CD8-positive, alpha-beta T cell (primary cell): ENCODE measurements at regions of chr16 and their contacts with region 1.

Region 1: DNA sequence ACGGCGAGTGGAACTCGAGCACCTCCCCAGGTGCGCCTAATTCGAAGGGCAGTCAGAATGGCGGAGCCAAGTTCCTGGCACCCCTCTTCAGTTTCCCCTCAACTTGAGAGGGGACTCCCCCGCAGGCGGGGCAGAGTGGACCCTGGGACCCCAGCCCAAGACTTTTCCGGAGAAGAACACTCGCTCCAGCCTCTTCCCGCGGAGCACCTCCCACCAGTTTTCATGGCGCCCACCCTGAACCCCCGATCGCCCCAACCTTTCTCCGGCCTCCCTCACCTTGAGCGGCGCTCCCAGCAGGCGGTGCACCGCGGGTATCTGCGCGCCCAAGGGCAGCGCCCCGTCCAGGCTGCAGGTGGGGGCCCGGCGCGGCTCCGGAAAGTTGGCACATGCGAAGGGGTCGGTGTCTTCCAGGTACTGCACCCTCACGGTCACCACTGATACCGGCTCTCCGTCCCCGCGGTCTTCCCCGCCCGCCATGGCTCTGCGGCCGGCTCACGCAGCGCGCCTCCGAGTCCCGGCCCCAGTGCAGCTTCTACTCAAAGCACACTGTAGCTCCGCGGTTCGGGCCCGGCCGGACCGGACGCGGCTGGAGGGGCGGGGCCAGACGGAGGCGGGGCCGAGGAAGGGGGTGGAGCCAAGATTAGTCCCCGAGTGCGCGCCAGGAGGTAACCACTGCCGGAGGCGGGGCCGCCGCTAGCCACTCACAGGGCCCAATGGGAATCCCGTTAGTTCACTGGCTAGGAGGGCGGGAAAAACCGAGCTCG is at the start of gene FHOD1:
- DNase-seq: peak; percentile 86 to 98 (median 96)
- ATAC-seq: peak; percentile 70
- H3K4me3 ChIP-seq: peak within 1 kb of the TSS; percentile 81 to 92
- H3K4me3 Mint-ChIP-seq: peak within 1 kb of the TSS; percentile 88
- H3K27ac ChIP-seq: peak within 1 kb of the TSS; percentile 44 to 86
- H3K27ac Mint-ChIP-seq: peak within 1 kb of the TSS; percentile 82
- H3K4me1 ChIP-seq: peaks cover 47% of the 10 kb centered on the region
- H3K4me1 Mint-ChIP-seq: peaks cover 51% of the 10 kb centered on the region
- H3K27me3 ChIP-seq: peaks cover 0 to 3% of the 10 kb centered on the region in 2 experiments
- H3K27me3 Mint-ChIP-seq: peaks cover 3% of the 10 kb centered on the region
- CTCF ChIP-seq: no peak
- total RNA-seq, gene FHOD1: 15.2 to 18.7 TPM

Region 2: DNA sequence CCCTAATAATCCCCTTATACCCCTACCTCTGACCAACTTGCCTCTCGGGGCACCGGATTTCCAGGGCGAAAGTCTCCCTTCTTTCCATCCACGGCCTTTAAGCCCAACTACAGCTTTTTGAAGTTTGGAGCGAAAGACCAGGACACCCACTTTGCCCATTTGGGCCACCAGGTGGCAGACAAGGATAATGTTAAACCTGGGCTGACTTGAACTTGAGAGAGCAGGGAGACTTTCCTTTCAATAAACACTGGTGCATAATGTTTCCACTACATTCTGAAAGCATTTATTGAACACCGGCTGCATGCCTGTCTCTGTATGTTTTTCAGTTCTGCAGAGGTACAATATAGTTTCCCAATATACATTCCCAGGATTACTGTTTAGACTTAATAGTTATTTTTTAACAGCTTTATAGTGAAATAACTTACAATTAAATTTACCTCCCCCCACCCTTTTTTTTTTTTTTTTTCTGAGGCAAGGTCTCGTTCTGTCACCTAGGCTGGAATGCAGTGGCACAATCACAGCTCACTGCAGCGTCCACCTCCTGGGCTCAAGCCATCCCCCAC is 292.9 kb before region 1 on chr16:
- CTCF ChIA-PET with region 1: no interaction called
- POLR2A ChIA-PET with region 1: no interaction called
- intact Hi-C with region 1: loop called in 1 of 2 experiments (anchors 5 kb)
- DNase-seq: peak; percentile 56 to 81 (median 74)
- ATAC-seq: peak; percentile 91
- H3K4me3 ChIP-seq: no peak overlapping the region
- H3K4me3 Mint-ChIP-seq: no peak overlapping the region
- H3K27ac ChIP-seq: no peak overlapping the region
- H3K27ac Mint-ChIP-seq: no peak overlapping the region
- H3K4me1 ChIP-seq: peaks cover under 1% of the 10 kb centered on the region
- H3K4me1 Mint-ChIP-seq: peaks cover 6% of the 10 kb centered on the region
- H3K27me3 ChIP-seq: peaks cover 2 to 7% of the 10 kb centered on the region in 2 experiments
- H3K27me3 Mint-ChIP-seq: peaks cover 37% of the 10 kb centered on the region
- CTCF ChIP-seq: peak; percentile 85

Region 3: GRCh38 chr16:67191995-67192681 is 55.0 kb before region 1 on chr16 and contains the start of gene E2F4:
- CTCF ChIA-PET with region 1: interaction called, 4 read pairs
- POLR2A ChIA-PET with region 1: no interaction called
- intact Hi-C with region 1: loop called in 1 of 2 experiments (anchors 2 kb)
- DNase-seq: peak; percentile 72 to 94 (median 83)
- ATAC-seq: peak; percentile 86
- H3K4me3 ChIP-seq: peak within 1 kb of the TSS; percentile 84 to 100
- H3K4me3 Mint-ChIP-seq: peak within 1 kb of the TSS; percentile 89
- H3K27ac ChIP-seq: peak within 1 kb of the TSS; percentile 84 to 86
- H3K27ac Mint-ChIP-seq: peak within 1 kb of the TSS; percentile 89
- H3K4me1 ChIP-seq: peaks cover 27% of the 10 kb centered on the region
- H3K4me1 Mint-ChIP-seq: peaks cover 45% of the 10 kb centered on the region
- H3K27me3 ChIP-seq: peaks cover 0 to under 1% of the 10 kb centered on the region in 2 experiments
- H3K27me3 Mint-ChIP-seq: peaks cover 2% of the 10 kb centered on the region
- CTCF ChIP-seq: no peak
- total RNA-seq, gene E2F4: 61.9 to 63.8 TPM

Region 4: DNA sequence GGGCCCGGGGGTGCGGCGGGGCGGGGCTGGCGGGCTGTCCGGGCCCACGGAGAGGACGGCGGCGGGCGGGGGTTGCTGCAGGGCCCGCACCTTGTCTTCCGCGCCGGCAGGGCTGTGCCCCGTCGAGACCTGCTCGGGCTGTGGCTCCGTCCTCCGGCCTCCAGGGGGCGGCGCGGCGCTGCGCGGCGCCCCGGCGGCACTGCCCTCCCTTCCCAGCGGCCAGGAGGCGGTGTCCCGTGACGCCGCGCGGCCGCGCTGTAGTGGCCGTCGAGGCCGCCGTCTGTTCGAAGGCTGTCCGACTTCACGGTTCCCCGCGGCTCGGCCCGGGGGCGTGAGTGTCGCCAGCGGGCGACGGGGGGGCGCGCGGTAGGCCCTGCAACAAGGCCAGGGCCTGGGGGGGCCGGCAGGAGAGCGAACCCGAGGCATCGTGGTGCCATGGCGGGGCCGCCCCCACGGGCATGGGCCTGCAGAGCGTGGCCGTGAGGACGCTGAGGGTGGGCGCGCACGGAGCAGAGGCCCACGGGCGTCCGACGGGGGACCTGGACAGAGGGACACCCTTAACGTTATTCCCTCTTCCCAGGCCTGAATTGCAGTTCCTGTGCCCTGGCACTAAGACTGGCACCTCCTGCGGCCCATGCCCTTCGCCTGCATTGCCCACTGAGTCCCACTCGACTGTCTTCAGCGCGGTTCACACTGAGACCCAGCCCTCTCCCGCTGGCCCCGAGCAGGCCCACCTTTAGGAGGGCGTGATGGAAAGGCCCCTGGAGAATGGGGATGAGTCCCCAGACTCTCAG is 32.4 kb after region 1 on chr16 and contains the start of gene PLEKHG4:
- CTCF ChIA-PET with region 1: no interaction called
- POLR2A ChIA-PET with region 1: interaction called, 3 read pairs
- intact Hi-C with region 1: loop called in 1 of 2 experiments (anchors 1 kb)
- DNase-seq: peak; percentile 58 to 90 (median 80)
- ATAC-seq: peak; percentile 97
- H3K4me3 ChIP-seq: peak within 1 kb of the TSS; percentile 64 to 84
- H3K4me3 Mint-ChIP-seq: peak within 1 kb of the TSS; percentile 82
- H3K27ac ChIP-seq: peak within 1 kb of the TSS; percentile 43 to 53
- H3K27ac Mint-ChIP-seq: peak within 1 kb of the TSS; percentile 66
- H3K4me1 ChIP-seq: peaks cover 21% of the 10 kb centered on the region
- H3K4me1 Mint-ChIP-seq: peaks cover 17% of the 10 kb centered on the region
- H3K27me3 ChIP-seq: no peaks in the 10 kb centered on the region
- H3K27me3 Mint-ChIP-seq: no peaks in the 10 kb centered on the region
- CTCF ChIP-seq: peak; percentile 60
- total RNA-seq, gene PLEKHG4: 11.3 to 13.7 TPM

Region 5: DNA sequence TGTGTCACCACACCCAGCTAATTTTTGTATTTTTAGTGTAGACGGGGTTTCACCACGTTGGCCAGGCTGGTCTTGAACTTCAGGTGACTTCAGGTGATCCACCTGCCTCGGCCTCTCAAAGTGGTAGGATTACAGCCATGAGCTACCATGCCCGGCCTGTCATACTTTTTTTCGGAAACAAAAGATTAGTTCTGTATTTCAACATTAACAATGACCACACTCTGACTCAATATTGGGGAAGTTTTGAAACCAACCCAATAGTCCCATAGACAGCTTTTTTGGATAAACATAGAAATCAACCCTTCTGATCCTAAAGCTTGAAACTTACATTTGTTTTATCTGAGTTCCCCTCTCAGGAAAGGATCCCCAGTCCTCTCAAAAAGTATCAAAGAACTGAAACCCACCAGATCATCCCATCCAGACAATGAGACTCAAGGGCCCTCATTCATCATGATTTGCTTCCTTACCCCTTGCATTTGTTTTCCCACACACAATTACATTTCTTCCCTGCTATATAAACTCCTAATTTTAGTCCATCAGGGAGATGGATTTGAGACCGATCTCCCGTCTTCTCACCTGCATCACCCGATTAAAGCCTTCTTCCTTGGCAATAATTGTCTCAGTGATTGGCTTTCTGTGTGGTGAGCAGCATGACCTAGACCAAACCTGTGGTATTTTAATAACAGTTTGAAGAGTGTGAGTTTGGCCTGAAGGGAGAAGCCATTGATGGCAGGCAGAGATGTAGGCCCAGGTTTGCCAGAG is 243.4 kb after region 1 on chr16:
- CTCF ChIA-PET with region 1: no interaction called
- POLR2A ChIA-PET with region 1: no interaction called
- intact Hi-C with region 1: no loop called
- DNase-seq: no peak
- ATAC-seq: no peak
- H3K4me3 ChIP-seq: no peak overlapping the region
- H3K4me3 Mint-ChIP-seq: no peak overlapping the region
- H3K27ac ChIP-seq: no peak overlapping the region
- H3K27ac Mint-ChIP-seq: no peak overlapping the region
- H3K4me1 ChIP-seq: no peaks in the 10 kb centered on the region
- H3K4me1 Mint-ChIP-seq: peaks cover 10% of the 10 kb centered on the region
- H3K27me3 ChIP-seq: no peaks in the 10 kb centered on the region
- H3K27me3 Mint-ChIP-seq: no peaks in the 10 kb centered on the region
- CTCF ChIP-seq: no peak

Region 6: GRCh38 chr16:67660564-67661028 is 413.5 kb after region 1 on chr16 and contains the start of gene PARD6A:
- CTCF ChIA-PET with region 1: no interaction called
- POLR2A ChIA-PET with region 1: no interaction called
- intact Hi-C with region 1: loop called (anchors 2 to 10 kb)
- DNase-seq: peak; percentile 89 to 99 (median 95)
- ATAC-seq: peak; percentile 76
- H3K4me3 ChIP-seq: peak within 1 kb of the TSS; percentile 83 to 100
- H3K4me3 Mint-ChIP-seq: peak within 1 kb of the TSS; percentile 94
- H3K27ac ChIP-seq: peak within 1 kb of the TSS; percentile 92 to 100
- H3K27ac Mint-ChIP-seq: peak within 1 kb of the TSS; percentile 93
- H3K4me1 ChIP-seq: peaks cover 20% of the 10 kb centered on the region
- H3K4me1 Mint-ChIP-seq: peaks cover 23% of the 10 kb centered on the region
- H3K27me3 ChIP-seq: no peaks in the 10 kb centered on the region
- H3K27me3 Mint-ChIP-seq: no peaks in the 10 kb centered on the region
- CTCF ChIP-seq: no peak
- total RNA-seq, gene PARD6A: 3.0 to 3.1 TPM